ENCODE measurements at regions of chr20 and their contacts with region 1.

Region 1: DNA sequence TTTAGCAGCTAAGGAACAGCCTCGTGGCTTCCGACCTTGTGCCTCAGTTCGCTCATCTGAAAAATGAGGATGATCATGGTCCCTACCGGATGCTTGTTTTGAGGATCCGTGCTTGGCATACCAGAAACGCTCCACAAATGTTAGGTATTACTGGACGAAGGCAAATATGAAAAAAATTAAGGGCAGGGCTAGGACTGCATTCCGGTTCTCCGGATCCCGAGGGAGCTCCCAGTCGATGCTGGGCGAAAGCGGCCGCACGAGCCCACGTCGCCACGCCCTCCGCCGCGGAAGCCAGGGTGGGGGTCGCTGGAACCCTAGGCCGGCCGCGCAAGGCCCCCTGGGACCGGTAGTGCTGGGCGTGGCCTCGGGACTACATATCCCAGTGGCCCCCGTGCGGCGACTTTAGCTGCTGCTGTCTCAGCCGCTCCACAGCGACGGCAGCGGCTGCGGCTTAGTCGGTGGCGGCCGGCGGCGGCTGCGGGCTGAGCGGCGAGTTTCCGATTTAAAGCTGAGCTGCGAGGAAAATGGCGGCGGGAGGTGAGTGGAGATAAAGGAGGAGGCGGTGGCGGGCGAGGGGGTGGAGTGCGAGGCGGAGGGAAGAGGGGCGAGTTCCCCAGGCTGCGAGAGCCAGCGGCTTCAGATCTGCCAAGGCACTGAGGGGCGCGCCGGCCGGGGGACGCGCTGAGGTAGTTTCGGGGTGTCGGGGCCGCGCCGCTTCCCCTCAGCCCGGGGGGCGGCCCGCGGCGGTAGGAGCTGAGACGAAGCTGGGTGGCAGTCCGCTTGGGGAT is at the start of gene NCOA3:
- DNase-seq: peak; percentile 99
- H3K4me3 Mint-ChIP-seq: peak within 1 kb of the TSS; percentile 83
- H3K27ac Mint-ChIP-seq: peak within 1 kb of the TSS; percentile 80
- H3K4me1 Mint-ChIP-seq: peaks cover 49% of the 10 kb centered on the region
- H3K27me3 Mint-ChIP-seq: no peaks in the 10 kb centered on the region
- CTCF ChIP-seq: peak; percentile 77
- total RNA-seq, gene NCOA3: 60.3 and 63.8 TPM in 2 replicates

Region 2: GRCh38 chr20:47392015-47392720 is 109.5 kb before region 1 on chr20:
- CTCF ChIA-PET with region 1: interaction called, 5 read pairs
- intact Hi-C with region 1: loop called (anchors 2 kb)
- DNase-seq: peak; percentile 87
- H3K4me3 Mint-ChIP-seq: peak overlapping the region; percentile 34
- H3K27ac Mint-ChIP-seq: peak overlapping the region; percentile 100
- H3K4me1 Mint-ChIP-seq: peaks cover 34% of the 10 kb centered on the region
- H3K27me3 Mint-ChIP-seq: no peaks in the 10 kb centered on the region
- CTCF ChIP-seq: no peak

Region 3: DNA sequence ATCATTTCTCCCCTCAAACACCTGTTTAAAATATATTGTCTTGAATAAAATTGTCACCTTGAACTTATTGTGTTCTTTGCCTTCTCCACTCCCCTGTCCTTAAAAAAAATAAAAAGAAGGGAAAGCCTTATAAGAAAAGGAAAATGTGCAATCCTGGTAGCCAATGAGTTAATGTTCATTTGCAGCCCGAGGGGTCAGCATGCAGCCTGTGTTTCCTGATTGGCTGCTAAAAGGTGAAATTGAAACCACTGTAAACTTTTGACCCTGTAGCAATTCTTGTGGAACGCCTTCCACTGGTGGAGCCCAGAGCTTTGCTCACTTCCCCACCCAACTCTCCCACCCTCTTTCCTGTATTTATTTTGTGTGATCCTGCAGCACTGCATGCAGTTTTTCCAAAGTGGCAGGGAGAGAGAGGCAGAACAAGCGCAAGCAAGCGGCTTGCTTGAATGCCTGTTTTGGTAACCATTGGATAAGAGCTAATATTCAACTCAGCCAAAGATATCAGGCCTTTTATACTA is 74.9 kb after region 1 on chr20:
- CTCF ChIA-PET with region 1: interaction called, 11 read pairs
- intact Hi-C with region 1: loop called (anchors 2 kb)
- DNase-seq: peak; percentile 78
- H3K4me3 Mint-ChIP-seq: peak overlapping the region; percentile 59
- H3K27ac Mint-ChIP-seq: peak overlapping the region; percentile 70
- H3K4me1 Mint-ChIP-seq: peaks cover 79% of the 10 kb centered on the region
- H3K27me3 Mint-ChIP-seq: no peaks in the 10 kb centered on the region
- CTCF ChIP-seq: no peak

Region 4: GRCh38 chr20:47620808-47621805 is 119.4 kb after region 1 on chr20:
- CTCF ChIA-PET with region 1: interaction called, 13 read pairs
- intact Hi-C with region 1: loop called (anchors 2 kb)
- DNase-seq: peak; percentile 48
- H3K4me3 Mint-ChIP-seq: no peak overlapping the region
- H3K27ac Mint-ChIP-seq: peak overlapping the region; percentile 11
- H3K4me1 Mint-ChIP-seq: peaks cover 17% of the 10 kb centered on the region
- H3K27me3 Mint-ChIP-seq: no peaks in the 10 kb centered on the region
- CTCF ChIP-seq: peak; percentile 90